ENCODE measurements at regions of chr10 and their contacts with region 1.

Region 1: DNA sequence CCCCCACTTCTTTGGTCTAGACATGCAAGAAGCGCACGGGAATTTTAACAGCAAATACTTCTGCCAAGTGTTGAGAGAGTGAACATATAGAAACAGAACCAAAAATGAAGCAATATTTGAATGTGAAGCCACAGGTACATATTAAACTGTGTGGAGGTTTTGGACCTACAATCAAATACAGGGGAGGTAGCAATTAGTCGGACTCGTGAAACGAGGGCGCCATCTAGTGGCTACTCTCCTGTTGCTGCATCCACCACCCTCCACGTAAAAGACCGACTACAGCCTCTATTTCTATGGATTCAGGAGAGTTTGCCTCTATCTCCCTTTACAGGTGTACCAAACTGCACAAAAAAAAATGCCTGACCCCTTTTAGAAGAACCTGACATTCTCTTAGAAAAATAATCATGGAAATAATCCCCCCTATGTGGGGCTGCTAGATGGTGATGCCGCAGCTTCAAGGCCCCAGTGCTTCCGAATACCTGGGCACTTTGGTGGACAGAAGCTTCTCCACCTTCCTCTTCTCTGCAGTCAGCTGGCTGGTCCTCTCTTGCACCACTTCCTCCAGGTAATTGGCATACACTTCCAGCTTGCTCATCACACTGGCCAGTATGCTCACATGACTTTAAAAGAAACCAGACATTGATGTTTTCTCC is 31.7 kb downstream of the TECTB start:
- DNase-seq: peak; percentile 51 to 84 (median 77)
- ATAC-seq: peak; percentile 98
- H3K4me3 ChIP-seq: no peak overlapping the region
- H3K27ac ChIP-seq: no peak overlapping the region
- H3K4me1 ChIP-seq: no peaks in the 10 kb centered on the region
- H3K27me3 ChIP-seq: peaks cover 0 to 18% of the 10 kb centered on the region in 2 donors
- CTCF ChIP-seq: peak; percentile 90 to 97

Region 2: GRCh38 chr10:112052166-112052565 is 262.8 kb before region 1 on chr10:
- intact Hi-C with region 1: no loop called
- DNase-seq: no peak
- ATAC-seq: no peak
- H3K4me3 ChIP-seq: no peak overlapping the region
- H3K27ac ChIP-seq: no peak overlapping the region
- H3K4me1 ChIP-seq: no peaks in the 10 kb centered on the region
- H3K27me3 ChIP-seq: no peaks in the 10 kb centered on the region
- CTCF ChIP-seq: no peak

Region 3: GRCh38 chr10:112434988-112435619 is 120.2 kb after region 1 on chr10:
- intact Hi-C with region 1: loop called in 1 of 2 experiments (anchors 5 kb)
- DNase-seq: peak in 2 of 4 donors; percentile 4 to 19
- ATAC-seq: peak; percentile 65
- H3K4me3 ChIP-seq: no peak overlapping the region
- H3K27ac ChIP-seq: no peak overlapping the region
- H3K4me1 ChIP-seq: no peaks in the 10 kb centered on the region
- H3K27me3 ChIP-seq: no peaks in the 10 kb centered on the region
- CTCF ChIP-seq: peak in 1 of 2 donors; percentile 34

Region 4: DNA sequence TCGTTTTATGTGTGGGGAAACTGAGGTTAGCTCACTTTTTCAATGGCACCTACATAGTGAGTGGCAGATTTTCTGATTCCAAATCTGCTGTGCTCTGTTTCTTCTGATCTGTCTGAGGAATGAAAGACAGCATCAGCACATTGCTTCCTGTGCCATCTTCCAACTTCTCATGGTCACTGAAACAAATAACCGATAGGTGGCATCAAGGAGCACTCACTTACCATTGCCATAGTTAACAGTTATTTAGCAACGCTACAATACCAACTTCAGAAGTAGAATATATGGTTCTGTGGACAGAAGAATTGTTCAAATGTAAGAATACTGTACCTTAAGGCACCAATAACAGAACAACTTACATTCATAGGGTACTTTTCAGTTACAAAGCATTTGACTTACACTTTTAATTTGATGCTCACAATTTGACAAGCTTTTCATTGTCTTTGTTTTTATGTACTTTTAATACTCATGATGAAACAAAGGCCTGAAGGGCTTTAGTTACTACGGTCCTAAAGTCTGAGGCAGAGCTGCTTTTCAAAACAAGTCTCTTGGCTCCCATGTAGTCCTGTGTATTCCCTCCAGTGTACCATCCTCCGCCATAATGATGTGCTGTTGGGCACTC is 406.2 kb after region 1 on chr10:
- intact Hi-C with region 1: no loop called
- DNase-seq: peak in 1 of 4 donors; percentile 41
- ATAC-seq: peak; percentile 79
- H3K4me3 ChIP-seq: no peak overlapping the region
- H3K27ac ChIP-seq: no peak overlapping the region
- H3K4me1 ChIP-seq: no peaks in the 10 kb centered on the region
- H3K27me3 ChIP-seq: no peaks in the 10 kb centered on the region
- CTCF ChIP-seq: peak; percentile 42 to 58